Dendritic cell treated with granulocyte-macrophage colony-stimulating factor and Interleukin-4, amounts not matched to agents 40 ng/mL and 50 ng/mL, for 4 days (primary cell): ENCODE measurements at regions of chr17 and their contacts with region 1.

Region 1: GRCh38 chr17:47604598-47604927 is 45.2 kb upstream of the KPNB1 start:
- H3K4me3 Mint-ChIP-seq: no peak overlapping the region
- H3K27ac Mint-ChIP-seq: no peak overlapping the region
- H3K4me1 Mint-ChIP-seq: no peaks in the 10 kb centered on the region
- H3K27me3 Mint-ChIP-seq: no peaks in the 10 kb centered on the region

Region 2: GRCh38 chr17:47159315-47159714 is 445.2 kb before region 1 on chr17:
- intact Hi-C with region 1: loop called (anchors 10 kb)
- H3K4me3 Mint-ChIP-seq: no peak overlapping the region
- H3K27ac Mint-ChIP-seq: no peak overlapping the region
- H3K4me1 Mint-ChIP-seq: peaks cover 8% of the 10 kb centered on the region
- H3K27me3 Mint-ChIP-seq: no peaks in the 10 kb centered on the region

Region 3: GRCh38 chr17:47670081-47670480 is 65.5 kb after region 1 on chr17:
- intact Hi-C with region 1: loop called (anchors 5 kb)
- H3K4me3 Mint-ChIP-seq: no peak overlapping the region
- H3K27ac Mint-ChIP-seq: peak overlapping the region; percentile 7
- H3K4me1 Mint-ChIP-seq: peaks cover 10% of the 10 kb centered on the region
- H3K27me3 Mint-ChIP-seq: no peaks in the 10 kb centered on the region

Region 4: GRCh38 chr17:47882247-47882646 is 277.7 kb after region 1 on chr17:
- intact Hi-C with region 1: no loop called
- H3K4me3 Mint-ChIP-seq: peak overlapping the region; percentile 35
- H3K27ac Mint-ChIP-seq: peak overlapping the region; percentile 10
- H3K4me1 Mint-ChIP-seq: peaks cover 33% of the 10 kb centered on the region
- H3K27me3 Mint-ChIP-seq: peaks cover 17% of the 10 kb centered on the region